Head of caudate nucleus (tissue), 42 donors: ENCODE measurements at regions of chr4 and their contacts with region 1.

Region 1: DNA sequence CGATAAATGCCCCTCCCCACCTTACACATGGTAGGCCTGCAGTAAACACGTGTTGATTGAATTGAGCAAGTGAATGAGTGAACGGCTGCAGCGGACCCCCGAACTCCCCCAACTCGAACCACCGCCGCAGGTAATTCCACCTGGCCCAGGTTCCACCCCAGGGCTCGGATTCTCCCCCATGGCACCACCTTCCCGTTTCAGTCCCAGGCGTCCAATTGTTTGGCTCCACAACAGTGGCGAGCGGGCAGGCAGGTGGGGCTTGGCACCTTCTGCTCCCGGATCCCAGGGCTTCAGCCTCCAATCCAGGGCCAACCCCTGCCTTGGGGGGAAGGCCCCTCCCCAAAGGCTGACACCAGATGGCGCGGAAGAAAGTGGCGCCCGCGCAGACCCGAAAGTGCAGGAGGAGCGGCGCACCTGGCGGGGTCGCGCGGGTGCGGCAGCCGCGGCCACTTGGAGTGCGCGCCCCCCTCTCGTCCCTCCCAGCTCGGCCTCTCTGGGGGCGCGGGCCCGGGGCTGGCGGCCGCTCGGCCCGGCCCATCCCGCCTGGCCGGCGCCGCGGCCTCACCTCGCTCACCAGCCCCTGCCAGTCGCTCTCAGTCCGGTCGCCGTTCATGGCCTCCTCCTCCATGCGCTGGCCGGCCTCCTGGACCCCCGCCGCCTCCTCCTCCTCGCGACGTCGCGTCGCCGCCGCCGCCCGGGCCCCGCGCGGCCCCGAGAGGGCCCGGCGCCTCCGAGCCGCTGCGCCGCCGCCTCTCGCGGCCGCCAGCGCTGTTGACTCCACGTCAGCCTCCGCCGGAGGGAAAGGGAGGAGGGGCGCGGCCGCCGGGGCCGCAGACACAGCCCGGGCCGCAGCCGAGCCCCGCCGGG is at the start of gene CCDC149:
- DNase-seq: peak in 41 of 42 donors; percentile 27 to 83 (median 68)

Region 2: DNA sequence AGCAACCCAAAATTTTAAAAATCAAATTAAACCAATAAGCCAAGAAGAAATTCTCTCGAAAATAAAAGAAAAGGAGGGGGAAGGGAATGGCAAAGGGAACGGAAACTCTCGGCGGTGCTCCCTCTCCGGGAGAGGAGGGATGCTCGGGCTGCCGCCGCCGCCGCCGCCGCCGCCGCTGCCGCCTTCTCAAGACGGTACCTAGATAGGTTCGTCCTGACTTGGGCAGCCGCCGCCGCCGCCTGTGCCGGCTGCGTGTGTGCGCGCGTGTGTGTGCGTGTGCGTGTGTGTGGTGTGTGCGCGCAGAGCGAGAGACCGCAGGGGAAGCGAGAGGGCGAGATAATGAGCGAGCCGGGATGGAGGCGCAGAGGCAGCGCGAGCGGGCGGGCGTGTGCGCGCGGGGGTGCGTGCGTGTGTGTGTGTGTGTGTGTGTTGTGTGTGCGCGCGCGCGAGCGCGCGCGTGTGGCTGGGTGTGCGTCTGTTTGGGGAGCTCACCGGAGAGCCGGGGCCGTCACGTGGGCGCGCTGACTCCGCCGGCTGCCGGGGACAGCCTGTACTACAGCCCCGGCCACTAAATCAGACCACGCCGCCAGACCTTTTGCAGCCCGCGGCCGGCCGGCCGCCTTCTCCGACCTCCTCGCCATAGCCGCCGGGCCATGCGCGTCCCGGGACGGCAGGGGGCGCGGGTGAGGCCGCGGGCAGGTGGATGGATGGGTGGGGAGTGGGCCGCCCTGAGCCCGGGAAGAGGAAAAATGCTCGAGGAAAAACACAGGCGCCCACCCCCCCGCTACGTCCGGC is 439.8 kb before region 1 on chr4:
- intact Hi-C with region 1: loop called (anchors 10 kb)
- DNase-seq: peak; percentile 61 to 92 (median 84)

Region 3: GRCh38 chr4:24584175-24584850 is 328.2 kb before region 1 on chr4 and contains the start of gene DHX15:
- intact Hi-C with region 1: loop called (anchors 10 kb)
- DNase-seq: peak; percentile 91 to 98 (median 95)